Activated CD4-positive, alpha-beta T cell treated with anti-CD3 and anti-CD28 coated beads, Interleukin-2, amount 10 ng/mL, durations not matched to agents 24 days and 14 days (primary cell): ENCODE measurements at regions of chr1 and their contacts with region 1.

Region 1: DNA sequence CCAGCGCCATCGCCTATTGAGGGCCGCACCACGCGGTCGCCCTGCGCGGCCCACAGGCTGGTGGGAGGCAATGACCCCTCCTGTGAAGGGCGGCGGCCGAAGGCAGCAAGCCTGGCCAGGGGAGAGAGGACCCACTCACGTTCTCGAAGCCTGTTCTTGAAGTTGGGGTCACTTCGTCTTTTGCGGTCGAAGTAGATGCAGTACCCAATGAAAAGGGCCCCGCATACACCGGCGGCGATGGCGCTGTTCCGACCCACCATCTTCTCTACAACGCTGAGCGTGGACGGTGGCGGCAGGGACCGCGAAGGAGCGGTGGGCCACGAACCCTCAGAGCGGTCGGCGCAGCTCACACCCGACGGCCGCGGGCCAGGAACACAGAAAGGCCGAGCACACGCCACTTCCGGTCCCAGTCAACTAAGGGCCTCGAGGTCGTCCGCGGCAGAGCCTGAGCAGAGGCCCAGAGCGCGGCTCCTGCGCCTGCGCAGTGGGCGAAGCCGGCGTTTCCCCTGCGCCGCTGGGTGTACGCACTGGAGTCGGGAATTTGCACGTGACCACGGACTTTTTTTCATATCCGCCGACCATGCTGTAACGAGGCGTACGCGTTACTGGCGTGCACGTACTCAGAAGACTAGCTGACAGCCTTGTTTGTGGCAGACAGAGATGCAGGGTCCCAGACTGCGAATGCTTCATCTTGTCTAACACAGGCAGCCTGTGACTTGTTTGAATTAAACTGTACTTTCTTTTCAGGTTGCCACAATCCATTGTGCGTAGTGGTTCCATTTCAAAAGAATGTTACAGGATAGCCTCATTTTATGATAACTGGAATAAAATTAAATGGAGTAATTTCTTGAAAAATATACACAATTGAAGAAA is at the start of gene TOMM20:
- DNase-seq: peak; percentile 98
- H3K4me3 Mint-ChIP-seq: peak within 1 kb of the TSS; percentile 98
- H3K27ac Mint-ChIP-seq: peak within 1 kb of the TSS; percentile 99
- H3K4me1 Mint-ChIP-seq: peaks cover 28% of the 10 kb centered on the region
- H3K27me3 Mint-ChIP-seq: peaks cover 2% of the 10 kb centered on the region
- total RNA-seq, gene TOMM20: 119 and 140 TPM in 2 replicates

Region 2: DNA sequence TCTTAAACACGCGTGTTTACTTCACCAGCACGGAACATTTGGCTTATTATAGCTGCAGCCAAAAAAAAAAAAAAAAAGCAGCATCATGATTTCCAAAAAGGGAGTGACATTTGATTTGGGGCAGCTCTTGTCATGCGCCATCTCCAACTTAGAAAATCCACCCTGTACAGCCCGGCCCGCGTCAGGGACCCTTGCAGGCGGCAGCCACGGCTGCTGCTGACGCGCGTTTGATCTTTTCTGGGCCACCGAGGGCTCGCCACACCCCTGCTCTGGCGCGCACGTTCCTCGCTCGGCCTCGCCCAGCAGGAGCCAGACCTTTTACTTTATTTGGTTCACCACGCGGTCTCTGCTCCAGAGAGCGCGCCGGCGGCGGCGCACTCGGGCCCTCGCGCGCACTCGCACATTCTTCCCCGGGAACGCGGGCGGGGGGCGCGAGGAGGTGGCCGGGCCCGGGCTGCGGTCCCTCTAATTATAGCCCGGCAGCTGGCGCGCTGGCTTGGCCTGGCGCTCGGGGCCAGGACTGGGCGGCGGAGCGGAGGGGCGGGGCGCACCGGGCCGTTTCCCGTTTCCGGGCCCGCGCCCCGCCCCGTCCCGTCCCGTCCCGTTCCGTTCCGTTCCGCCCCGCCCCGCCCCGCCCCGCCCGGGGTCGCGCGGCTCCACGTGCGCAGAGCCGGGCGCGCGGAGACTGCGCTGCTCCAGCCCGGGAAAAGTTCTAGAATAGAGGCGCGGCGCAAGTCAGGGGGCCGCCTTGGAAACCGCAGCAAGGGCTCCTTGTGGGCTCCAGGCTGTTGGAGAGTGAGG is 528.9 kb before region 1 on chr1:
- intact Hi-C with region 1: loop called (anchors 5 kb)
- DNase-seq: peak; percentile 92
- H3K4me3 Mint-ChIP-seq: peak overlapping the region; percentile 89
- H3K27ac Mint-ChIP-seq: peak overlapping the region; percentile 97
- H3K4me1 Mint-ChIP-seq: peaks cover 47% of the 10 kb centered on the region
- H3K27me3 Mint-ChIP-seq: no peaks in the 10 kb centered on the region

Region 3: DNA sequence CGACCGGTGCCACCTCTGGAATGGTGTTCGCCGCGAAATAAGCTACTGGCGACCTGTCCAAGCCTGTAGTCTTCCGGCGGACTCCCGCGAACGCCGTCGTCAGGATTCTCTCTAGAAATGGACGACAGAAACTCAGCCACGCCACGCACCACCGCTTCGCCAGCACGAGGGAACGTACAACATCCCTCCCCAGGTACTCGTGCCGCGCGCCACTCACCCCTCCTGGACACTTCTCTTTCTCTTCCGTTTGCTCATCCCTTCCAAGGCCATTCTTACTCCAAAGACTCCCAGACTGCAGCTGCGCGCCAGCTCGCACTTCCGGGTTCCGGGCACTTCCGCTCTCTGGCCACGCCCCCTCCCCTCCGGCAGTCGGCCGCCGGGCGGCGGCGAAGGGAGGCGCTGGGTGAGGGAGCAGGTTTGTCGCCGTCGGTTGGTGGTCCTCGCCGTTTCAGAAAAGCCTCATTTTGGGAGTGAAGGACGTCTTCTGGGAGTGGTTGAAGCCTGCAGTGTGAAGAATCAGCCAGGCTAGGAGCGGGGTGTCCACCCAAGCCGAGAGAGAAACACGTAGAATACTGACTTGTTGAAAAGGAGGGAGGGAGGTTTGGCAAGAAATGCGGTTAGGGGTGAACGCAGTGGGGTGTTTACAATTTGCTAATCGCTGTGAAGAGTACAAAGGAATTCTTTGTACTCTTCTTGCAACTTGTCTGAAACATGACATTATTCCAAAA is 32.4 kb after region 1 on chr1 and contains the start of gene RBM34:
- intact Hi-C with region 1: loop called (anchors 1 kb)
- DNase-seq: peak; percentile 98
- H3K4me3 Mint-ChIP-seq: peak within 1 kb of the TSS; percentile 93
- H3K27ac Mint-ChIP-seq: peak within 1 kb of the TSS; percentile 94
- H3K4me1 Mint-ChIP-seq: peaks cover 12% of the 10 kb centered on the region
- H3K27me3 Mint-ChIP-seq: no peaks in the 10 kb centered on the region
- total RNA-seq, gene RBM34: 123 and 135 TPM in 2 replicates

Region 4: GRCh38 chr1:235176486-235176885 is 47.8 kb after region 1 on chr1:
- intact Hi-C with region 1: no loop called
- DNase-seq: peak; percentile 47
- H3K4me3 Mint-ChIP-seq: no peak overlapping the region
- H3K27ac Mint-ChIP-seq: no peak overlapping the region
- H3K4me1 Mint-ChIP-seq: peaks cover 5% of the 10 kb centered on the region
- H3K27me3 Mint-ChIP-seq: no peaks in the 10 kb centered on the region

Region 5: GRCh38 chr1:235504496-235505222 is 376.0 kb after region 1 on chr1:
- intact Hi-C with region 1: no loop called
- DNase-seq: peak; percentile 99
- H3K4me3 Mint-ChIP-seq: peak overlapping the region; percentile 95
- H3K27ac Mint-ChIP-seq: peak overlapping the region; percentile 97
- H3K4me1 Mint-ChIP-seq: peaks cover 25% of the 10 kb centered on the region
- H3K27me3 Mint-ChIP-seq: peaks cover 6% of the 10 kb centered on the region